ENCODE measurements at regions of chr13 and their contacts with region 1.

Region 1: DNA sequence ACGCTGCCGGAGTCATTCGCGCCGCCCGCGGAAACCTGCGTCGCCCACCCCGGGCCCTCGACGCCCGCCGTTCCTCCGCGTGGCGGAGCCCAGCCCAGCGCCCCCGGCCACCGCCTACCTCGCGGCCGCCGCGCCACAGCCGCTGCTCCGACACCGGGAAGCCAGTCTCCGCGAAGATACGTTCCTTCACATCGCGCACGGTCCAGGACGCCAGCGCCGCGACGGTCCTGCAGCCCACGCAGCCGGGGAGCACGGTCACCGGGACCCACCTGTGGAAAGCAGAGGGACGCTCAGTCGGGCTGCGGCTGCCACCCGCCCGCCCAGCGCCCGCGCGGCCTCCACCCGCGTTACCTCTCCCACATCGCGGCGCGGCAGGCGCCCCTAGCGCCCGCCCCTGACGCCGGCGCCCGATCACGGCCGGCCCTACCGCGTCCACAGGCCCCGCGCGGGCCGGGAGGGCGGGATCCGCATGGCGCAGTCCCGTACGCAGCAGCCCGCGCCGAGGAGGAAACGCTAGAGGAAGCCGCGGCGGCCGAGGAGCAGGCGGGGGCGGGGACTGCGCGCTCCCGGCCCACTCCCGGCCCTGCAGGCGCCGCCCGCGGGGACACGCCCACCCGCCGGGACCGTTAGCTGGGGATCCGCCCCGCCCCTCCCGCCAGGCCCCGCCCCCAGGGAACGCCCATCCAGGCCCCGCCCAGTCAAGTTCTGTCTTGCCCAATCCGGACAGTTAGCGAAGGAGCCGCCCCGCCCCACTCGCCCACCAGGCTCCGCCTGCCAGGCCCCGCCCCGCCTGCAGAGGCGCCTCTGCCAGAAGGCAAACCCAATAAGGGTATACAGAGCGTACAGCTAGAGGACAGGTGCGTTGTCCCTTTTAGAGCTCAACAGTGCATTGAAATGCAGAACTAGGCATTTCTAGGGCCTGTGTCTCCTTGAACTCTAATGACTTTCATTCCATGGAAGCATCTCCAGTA is 58.2 kb downstream of the SACS start:
- DNase-seq: peak; percentile 91
- ATAC-seq: peak; percentile 84
- H3K4me3 Mint-ChIP-seq: peak overlapping the region; percentile 78
- H3K27ac Mint-ChIP-seq: peak overlapping the region; percentile 77
- H3K4me1 Mint-ChIP-seq: peaks cover 66% of the 10 kb centered on the region
- H3K27me3 Mint-ChIP-seq: no peaks in the 10 kb centered on the region
- CTCF ChIP-seq: no peak

Region 2: DNA sequence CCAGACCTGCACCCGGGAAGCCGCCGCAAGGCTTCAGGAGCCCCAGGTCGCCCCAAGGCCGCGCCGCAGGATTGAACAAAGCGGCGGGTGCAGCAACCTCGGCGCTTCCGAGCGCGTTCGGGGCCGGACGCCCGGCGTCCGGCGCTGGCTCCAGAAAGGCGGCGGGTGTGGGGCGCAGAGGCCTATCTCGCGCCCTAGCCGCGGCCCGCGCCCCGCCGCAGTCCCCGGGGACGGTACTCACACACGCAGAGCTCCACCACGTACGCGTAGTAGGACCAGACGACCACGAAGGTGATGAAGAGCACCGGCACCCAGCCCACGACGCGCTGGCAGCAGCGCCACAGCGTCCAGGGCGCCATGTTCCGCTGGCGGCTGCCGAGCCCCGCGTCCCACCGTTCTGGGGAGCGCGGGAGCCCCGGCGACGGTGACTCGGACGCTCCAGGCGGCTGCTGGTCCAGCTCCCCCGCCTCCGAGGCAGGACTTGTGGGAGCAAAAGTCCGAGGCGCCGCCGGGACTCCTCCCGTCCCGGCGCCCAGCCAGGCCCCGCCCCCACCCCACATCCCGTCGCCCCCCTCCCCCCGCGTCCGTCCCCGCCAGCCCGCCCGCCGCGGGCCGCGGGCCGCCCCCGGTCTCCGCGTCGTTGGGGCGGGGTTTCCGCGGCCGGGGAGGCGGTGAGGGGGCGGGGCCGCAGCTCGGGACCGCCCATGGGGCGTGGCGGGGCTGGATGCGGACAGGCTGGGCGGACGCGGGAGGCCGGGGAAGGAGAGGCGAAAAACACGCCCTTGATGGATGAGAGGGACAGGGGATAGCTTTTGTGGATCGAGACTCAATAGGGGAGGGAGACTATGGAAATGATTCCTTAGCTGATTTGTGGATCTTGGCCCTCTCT is 1916.2 kb before region 1 on chr13 and contains the start of gene ZDHHC20:
- CTCF ChIA-PET with region 1: no interaction called
- POLR2A ChIA-PET with region 1: no interaction called
- intact Hi-C with region 1: loop called (anchors 2 kb)
- DNase-seq: peak; percentile 98
- ATAC-seq: peak; percentile 91
- H3K4me3 Mint-ChIP-seq: peak within 1 kb of the TSS; percentile 90
- H3K27ac Mint-ChIP-seq: peak within 1 kb of the TSS; percentile 86
- H3K4me1 Mint-ChIP-seq: peaks cover 36% of the 10 kb centered on the region
- H3K27me3 Mint-ChIP-seq: no peaks in the 10 kb centered on the region
- CTCF ChIP-seq: no peak
- total RNA-seq, gene ZDHHC20: 45.0 and 49.2 TPM in 2 replicates

Region 3: GRCh38 chr13:23357349-23357748 is 17.9 kb before region 1 on chr13:
- CTCF ChIA-PET with region 1: no interaction called
- POLR2A ChIA-PET with region 1: interaction called, 5 read pairs
- intact Hi-C with region 1: loop called (anchors 1 kb)
- DNase-seq: no peak
- ATAC-seq: no peak
- H3K4me3 Mint-ChIP-seq: no peak overlapping the region
- H3K27ac Mint-ChIP-seq: no peak overlapping the region
- H3K4me1 Mint-ChIP-seq: peaks cover 13% of the 10 kb centered on the region
- H3K27me3 Mint-ChIP-seq: no peaks in the 10 kb centered on the region
- CTCF ChIP-seq: no peak

Region 4: GRCh38 chr13:23466144-23467002 is 91.1 kb after region 1 on chr13:
- CTCF ChIA-PET with region 1: interaction called, 3 read pairs
- POLR2A ChIA-PET with region 1: no interaction called
- intact Hi-C with region 1: loop called (anchors 5 kb)
- DNase-seq: peak; percentile 51
- ATAC-seq: peak; percentile 88
- H3K4me3 Mint-ChIP-seq: peak overlapping the region; percentile 79
- H3K27ac Mint-ChIP-seq: no peak overlapping the region
- H3K4me1 Mint-ChIP-seq: peaks cover 8% of the 10 kb centered on the region
- H3K27me3 Mint-ChIP-seq: peaks cover 19% of the 10 kb centered on the region
- CTCF ChIP-seq: no peak

Region 5: GRCh38 chr13:23695711-23696464 is 320.6 kb after region 1 on chr13:
- CTCF ChIA-PET with region 1: no interaction called
- POLR2A ChIA-PET with region 1: no interaction called
- intact Hi-C with region 1: loop called (anchors 2 kb)
- DNase-seq: peak; percentile 65
- ATAC-seq: peak; percentile 98
- H3K4me3 Mint-ChIP-seq: peak overlapping the region; percentile 77
- H3K27ac Mint-ChIP-seq: peak overlapping the region; percentile 93
- H3K4me1 Mint-ChIP-seq: peaks cover 17% of the 10 kb centered on the region
- H3K27me3 Mint-ChIP-seq: peaks cover 5% of the 10 kb centered on the region
- CTCF ChIP-seq: no peak

Region 6: DNA sequence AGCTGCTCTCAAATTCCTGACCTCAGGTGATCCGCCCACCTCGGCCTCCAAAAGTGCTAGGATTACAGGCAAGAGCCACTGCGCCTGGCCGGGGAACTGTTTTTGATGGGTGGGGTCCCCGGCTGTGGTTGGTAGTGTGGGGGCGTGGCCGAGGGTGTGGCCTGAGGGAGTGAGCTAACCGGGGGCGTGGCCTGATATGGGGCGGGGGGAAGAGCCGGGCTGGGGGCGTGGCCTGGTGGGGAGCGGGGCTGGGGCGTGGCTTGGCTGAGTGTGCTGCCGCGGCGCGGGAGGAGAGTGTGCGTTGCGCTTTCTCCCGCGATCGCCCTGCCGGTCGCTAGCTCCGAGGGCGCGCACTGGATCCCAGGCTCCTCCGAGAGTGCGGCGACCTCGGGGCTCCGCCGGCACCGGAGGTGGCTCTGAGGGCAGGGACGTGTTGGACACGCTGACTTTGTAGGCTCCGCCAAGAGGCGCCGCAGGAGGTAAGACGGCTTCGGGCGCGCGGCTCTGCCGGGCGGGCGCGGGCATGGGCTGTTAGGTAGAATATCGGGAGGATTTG is 785.2 kb after region 1 on chr13 and contains the start of gene SPATA13:
- CTCF ChIA-PET with region 1: no interaction called
- POLR2A ChIA-PET with region 1: no interaction called
- intact Hi-C with region 1: loop called (anchors 1 kb)
- DNase-seq: peak; percentile 86
- ATAC-seq: peak; percentile 98
- H3K4me3 Mint-ChIP-seq: peak within 1 kb of the TSS; percentile 83
- H3K27ac Mint-ChIP-seq: no peak within 1 kb of the TSS
- H3K4me1 Mint-ChIP-seq: peaks cover 18% of the 10 kb centered on the region
- H3K27me3 Mint-ChIP-seq: peaks cover 11% of the 10 kb centered on the region
- CTCF ChIP-seq: no peak
- total RNA-seq, gene SPATA13: 10.6 and 11.8 TPM in 2 replicates

Region 7: DNA sequence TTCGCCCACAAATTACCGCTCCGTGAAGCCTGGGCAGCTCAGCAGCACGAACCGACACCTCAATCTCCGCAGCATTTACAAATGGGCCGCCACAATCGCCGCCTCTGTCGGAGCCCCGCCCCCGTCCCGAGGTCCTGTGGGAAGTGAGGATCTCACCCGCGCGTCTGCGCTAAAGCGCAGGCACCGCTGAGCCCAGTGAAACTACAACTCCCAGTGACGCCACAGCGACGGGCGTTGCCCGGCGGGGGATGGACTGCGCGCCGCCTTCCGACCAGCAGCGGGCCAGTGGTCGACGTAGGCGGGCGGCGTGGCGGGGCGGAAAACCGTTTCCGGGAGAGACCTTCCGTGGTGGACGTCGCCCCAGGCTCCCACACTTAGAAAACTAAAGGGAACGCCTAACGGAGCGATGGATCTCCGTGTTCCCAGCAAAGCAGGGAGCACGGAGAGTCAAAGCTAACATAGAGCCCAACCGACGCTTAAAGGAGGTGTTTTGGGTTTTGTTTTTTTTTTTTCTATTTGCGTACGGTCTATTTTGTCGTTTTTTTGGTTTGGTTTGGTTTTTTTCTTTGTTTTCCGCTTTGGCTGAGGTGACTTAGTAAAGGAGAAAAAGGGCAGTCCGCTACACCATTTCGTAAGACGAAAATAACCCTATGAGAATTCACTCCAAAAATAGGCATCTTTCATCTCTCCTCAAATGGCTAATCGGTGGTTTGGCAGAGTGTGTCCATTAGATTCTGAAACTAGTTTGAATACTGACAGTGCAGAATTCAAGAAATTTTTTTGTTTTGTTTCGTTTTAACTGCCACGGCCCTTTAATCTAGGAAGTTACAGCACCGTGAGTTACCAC is 1547.7 kb after region 1 on chr13:
- CTCF ChIA-PET with region 1: no interaction called
- POLR2A ChIA-PET with region 1: no interaction called
- intact Hi-C with region 1: loop called (anchors 5 kb)
- DNase-seq: peak; percentile 91
- ATAC-seq: peak; percentile 97
- H3K4me3 Mint-ChIP-seq: peak overlapping the region; percentile 91
- H3K27ac Mint-ChIP-seq: peak overlapping the region; percentile 97
- H3K4me1 Mint-ChIP-seq: peaks cover 16% of the 10 kb centered on the region
- H3K27me3 Mint-ChIP-seq: no peaks in the 10 kb centered on the region
- CTCF ChIP-seq: no peak

Region 8: DNA sequence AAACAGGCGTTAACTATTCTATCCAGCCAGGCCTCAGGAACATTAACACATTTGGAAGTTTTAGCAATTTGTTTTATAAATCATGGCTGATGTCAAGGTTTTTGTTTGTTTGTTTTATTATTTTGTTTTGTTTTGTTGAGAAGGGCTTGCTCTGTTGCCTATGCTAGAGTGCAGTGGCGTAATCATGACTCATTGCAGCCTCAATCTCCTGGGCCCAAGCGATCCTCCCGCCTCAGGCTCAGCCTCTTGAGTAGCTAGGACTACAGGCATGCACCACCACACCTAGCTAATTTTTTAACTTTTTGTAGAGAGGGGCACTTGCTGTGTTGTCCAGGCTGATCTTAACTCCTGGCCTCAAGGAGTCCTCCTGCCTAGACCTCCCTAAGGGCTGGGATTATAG is 1954.4 kb after region 1 on chr13:
- CTCF ChIA-PET with region 1: no interaction called
- POLR2A ChIA-PET with region 1: no interaction called
- intact Hi-C with region 1: no loop called
- DNase-seq: no peak
- ATAC-seq: no peak
- H3K4me3 Mint-ChIP-seq: no peak overlapping the region
- H3K27ac Mint-ChIP-seq: no peak overlapping the region
- H3K4me1 Mint-ChIP-seq: no peaks in the 10 kb centered on the region
- H3K27me3 Mint-ChIP-seq: no peaks in the 10 kb centered on the region
- CTCF ChIP-seq: no peak